ENCODE measurements at regions of chr17 and their contacts with region 1.

Region 1: DNA sequence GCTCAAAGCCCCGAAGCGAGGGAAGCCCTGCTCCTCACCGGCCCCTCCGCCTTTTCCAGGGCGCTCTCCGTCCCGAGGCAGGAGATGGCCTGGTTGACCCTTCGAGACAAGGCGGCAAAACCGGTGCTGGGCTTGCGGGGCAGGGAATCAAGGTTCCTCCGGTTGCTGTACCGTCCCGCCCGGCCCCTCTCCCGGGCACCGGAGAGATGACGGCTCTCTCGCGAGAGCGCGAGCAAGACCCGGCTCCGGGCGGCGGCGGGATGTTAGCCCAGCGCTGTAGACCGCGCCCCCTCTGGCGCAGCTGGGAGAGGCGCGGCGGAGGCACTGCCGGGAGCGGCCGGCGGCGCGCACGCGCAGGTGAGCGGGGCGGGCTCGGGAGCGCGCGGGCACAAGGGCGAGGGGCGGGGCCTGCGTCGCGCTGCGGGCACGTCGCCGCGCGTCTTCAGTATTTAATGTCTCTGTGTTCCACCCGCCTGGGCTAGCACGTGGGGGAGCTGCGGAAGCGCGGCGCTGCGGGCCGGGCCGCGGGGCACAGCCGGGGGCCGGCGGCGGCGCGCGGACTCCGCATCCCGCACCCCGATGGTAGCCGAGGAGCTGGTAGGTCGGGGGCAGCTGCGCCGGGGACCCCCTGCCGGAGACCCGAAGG is at the start of gene AKAP1:
- DNase-seq: peak; percentile 99
- H3K4me3 Mint-ChIP-seq: peak within 1 kb of the TSS; percentile 93
- H3K27ac Mint-ChIP-seq: peak within 1 kb of the TSS; percentile 92
- H3K4me1 Mint-ChIP-seq: peaks cover 45% of the 10 kb centered on the region
- H3K27me3 Mint-ChIP-seq: peaks cover 10% of the 10 kb centered on the region
- total RNA-seq, gene AKAP1: 54.6 and 56.8 TPM in 2 replicates

Region 2: DNA sequence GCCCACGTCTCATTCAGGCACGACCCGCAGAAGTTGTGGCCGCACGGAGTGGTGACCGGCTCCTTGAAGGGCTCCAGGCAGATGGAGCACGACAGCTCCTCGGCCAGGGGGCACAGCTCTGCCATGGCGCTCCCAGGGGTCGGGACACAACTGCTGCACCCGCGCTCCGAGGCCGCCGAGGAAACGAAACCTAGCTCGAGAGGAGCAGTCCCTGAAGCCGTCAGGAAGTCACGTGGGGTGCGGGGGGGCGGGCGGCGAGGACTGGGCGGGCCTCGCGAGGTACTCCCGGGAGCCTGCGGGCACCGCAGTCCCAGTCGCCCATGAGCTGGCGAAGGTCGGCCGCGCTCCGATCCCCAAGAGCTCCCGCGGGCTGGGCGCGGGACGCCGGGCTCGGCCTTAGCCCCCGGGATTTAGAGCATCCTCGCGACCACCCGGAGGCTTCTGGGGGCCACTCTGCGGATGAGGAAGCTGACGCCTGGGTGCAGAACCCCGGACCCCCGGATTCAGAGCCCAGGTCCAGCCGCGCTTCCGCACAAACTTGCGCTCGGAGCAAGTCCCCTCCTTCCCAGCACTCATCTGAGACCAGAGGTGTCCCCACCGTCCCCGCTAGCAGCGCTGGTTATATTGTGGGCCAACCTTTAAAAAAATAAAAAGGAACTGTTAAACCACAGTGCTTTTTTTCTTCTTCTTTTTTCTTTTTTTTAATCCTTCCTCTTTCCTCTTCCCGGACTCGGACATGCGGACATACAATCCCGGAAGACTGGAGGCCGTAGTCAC is 170.9 kb before region 1 on chr17 and contains the start of gene TRIM25:
- intact Hi-C with region 1: loop called (anchors 5 kb)
- DNase-seq: peak; percentile 94
- H3K4me3 Mint-ChIP-seq: peak within 1 kb of the TSS; percentile 97
- H3K27ac Mint-ChIP-seq: peak within 1 kb of the TSS; percentile 98
- H3K4me1 Mint-ChIP-seq: peaks cover 53% of the 10 kb centered on the region
- H3K27me3 Mint-ChIP-seq: no peaks in the 10 kb centered on the region
- total RNA-seq, gene TRIM25: 88.8 and 99.8 TPM in 2 replicates

Region 3: GRCh38 chr17:56977673-56978395 is 107.1 kb before region 1 on chr17 and contains the start of gene SCPEP1:
- intact Hi-C with region 1: loop called (anchors 1 kb)
- DNase-seq: peak; percentile 93
- H3K4me3 Mint-ChIP-seq: peak within 1 kb of the TSS; percentile 90
- H3K27ac Mint-ChIP-seq: peak within 1 kb of the TSS; percentile 87
- H3K4me1 Mint-ChIP-seq: peaks cover 21% of the 10 kb centered on the region
- H3K27me3 Mint-ChIP-seq: peaks cover 29% of the 10 kb centered on the region
- total RNA-seq, gene SCPEP1: 7.2 and 8.3 TPM in 2 replicates

Region 4: DNA sequence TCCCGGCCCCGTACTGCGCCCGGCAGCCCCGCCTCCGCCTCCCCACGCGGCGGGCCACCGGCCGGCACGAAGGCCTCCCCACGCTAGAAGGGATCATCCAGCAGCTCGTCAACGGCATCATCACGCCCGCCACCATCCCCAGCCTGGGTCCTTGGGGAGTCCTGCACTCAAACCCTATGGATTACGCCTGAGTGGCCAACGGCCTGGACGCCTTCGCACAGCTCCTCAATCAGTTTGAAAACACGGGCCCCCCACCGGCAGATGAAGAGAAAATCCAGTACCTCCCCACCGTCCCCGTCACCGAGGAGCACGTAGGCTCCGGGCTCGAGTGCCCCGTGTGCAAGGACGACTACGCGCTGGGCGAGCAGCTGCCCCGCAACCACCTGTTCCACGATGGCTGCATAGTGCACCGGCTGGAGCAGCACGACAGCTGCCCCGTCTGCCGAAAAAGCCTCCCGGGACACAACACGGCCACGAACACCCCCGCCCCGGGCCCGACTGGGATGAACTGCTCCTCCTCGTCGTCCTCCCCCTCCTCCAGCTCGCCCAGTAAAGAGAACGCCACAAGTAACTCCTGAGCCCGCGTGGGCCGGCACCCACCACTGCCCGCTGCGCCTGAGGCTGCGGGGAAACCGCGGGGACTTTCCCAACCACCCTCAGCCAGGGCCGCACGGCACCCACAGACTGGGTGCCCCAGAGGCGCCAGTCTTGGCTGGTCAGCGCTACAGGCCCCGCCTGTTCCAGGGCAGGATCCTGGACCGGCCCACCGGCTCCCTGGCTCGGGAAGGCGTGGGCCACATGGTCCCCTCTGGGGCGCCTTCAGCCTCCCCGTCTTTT is 38.8 kb before region 1 on chr17:
- intact Hi-C with region 1: loop called (anchors 2 kb)
- DNase-seq: peak; percentile 78
- H3K4me3 Mint-ChIP-seq: peak overlapping the region; percentile 81
- H3K27ac Mint-ChIP-seq: peak overlapping the region; percentile 72
- H3K4me1 Mint-ChIP-seq: peaks cover 20% of the 10 kb centered on the region
- H3K27me3 Mint-ChIP-seq: peaks cover 66% of the 10 kb centered on the region

Region 5: GRCh38 chr17:57166717-57167198 is 81.8 kb after region 1 on chr17:
- intact Hi-C with region 1: no loop called
- DNase-seq: no peak
- H3K4me3 Mint-ChIP-seq: no peak overlapping the region
- H3K27ac Mint-ChIP-seq: no peak overlapping the region
- H3K4me1 Mint-ChIP-seq: no peaks in the 10 kb centered on the region
- H3K27me3 Mint-ChIP-seq: peaks cover 9% of the 10 kb centered on the region

Region 6: DNA sequence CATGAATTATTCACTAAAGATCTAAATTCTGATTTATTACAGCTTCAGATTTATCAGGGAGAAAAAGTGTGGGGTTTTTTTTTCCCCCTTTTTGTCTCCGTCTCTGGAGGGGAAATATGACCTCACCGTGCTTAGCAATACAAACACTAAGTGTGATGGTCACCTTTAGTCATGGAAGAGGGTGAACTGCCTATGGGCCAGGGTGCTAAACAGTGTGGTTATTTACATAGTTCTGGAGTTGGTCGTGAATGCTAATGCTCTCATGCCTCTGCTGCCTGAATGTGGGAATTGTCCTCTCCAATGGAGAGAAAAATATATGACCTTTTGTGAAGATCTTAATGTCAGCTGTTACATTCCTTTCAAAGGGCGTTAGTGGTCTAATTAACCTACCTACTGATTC is 126.6 kb after region 1 on chr17:
- intact Hi-C with region 1: no loop called
- DNase-seq: no peak
- H3K4me3 Mint-ChIP-seq: no peak overlapping the region
- H3K27ac Mint-ChIP-seq: no peak overlapping the region
- H3K4me1 Mint-ChIP-seq: peaks cover 2% of the 10 kb centered on the region
- H3K27me3 Mint-ChIP-seq: peaks cover 39% of the 10 kb centered on the region

Region 7: DNA sequence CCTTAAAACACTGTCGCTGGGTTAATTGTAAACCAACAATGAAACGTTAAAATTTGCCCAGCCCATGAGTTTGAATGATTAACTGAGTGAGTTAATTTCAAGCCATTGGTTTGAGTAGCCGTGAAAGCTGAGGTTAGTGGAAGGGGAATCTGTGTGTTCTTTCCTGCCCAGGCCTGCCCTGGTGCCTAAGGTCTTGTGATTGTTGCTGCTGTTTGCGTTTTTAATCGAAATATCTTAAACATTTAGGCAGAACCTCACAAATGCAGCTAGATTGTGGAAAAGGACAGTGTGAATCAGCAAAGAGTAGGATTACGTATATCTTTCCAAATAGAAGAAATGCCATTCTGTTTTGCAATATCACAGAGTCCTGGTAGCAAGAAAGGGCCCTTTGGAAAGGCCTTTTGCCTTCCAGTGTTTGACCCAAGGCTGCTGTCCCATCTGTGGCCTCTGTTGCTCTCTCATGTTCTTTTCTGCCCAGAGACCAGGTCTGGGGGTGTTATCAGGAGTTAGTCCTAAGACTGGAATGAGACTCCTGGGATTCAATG is 285.2 kb after region 1 on chr17:
- intact Hi-C with region 1: no loop called
- DNase-seq: no peak
- H3K4me3 Mint-ChIP-seq: no peak overlapping the region
- H3K27ac Mint-ChIP-seq: no peak overlapping the region
- H3K4me1 Mint-ChIP-seq: peaks cover 23% of the 10 kb centered on the region
- H3K27me3 Mint-ChIP-seq: no peaks in the 10 kb centered on the region

Region 8: DNA sequence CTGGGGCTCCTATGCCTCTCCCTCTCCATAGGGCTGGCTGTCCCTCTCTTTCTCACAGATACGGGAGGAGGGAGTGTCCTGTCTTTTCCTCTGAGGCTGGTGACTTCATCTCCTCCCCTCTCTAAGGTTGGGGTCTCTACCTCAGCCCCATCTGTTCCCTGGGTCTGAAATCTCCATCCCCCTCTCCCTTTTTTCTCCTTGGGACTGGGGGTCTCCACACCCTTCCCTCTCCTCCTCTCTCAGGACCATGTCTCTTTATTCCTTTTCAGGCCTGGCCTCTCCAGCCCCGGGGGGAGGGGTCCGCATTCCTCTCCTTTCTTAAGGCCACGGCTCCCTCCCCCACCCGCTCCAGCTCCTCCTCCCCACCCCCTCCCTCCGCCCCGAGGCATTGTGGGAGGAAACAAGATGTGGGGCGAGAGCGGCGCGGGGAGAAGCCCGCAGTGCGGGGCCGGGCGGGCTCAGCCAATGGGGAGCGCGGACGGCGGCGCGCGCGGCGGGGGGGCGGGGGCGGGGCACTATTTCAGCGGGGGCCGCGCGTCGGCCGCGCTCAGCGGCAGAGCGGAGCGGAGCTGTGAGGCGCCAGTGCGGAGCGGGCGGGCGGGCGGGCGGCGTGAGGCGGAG is 998.1 kb after region 1 on chr17 and contains the start of gene DYNLL2:
- intact Hi-C with region 1: loop called (anchors 2 kb)
- DNase-seq: peak; percentile 95
- H3K4me3 Mint-ChIP-seq: peak within 1 kb of the TSS; percentile 88
- H3K27ac Mint-ChIP-seq: peak within 1 kb of the TSS; percentile 80
- H3K4me1 Mint-ChIP-seq: peaks cover 26% of the 10 kb centered on the region
- H3K27me3 Mint-ChIP-seq: peaks cover 20% of the 10 kb centered on the region
- total RNA-seq, gene DYNLL2: 36.6 and 37.2 TPM in 2 replicates

Measured in activated CD4-positive, alpha-beta T cell treated with anti-CD3 and anti-CD28 coated beads, Interleukin-2, amount 10 ng/mL, durations not matched to agents 24 days and 14 days (primary cell).